Gastrocnemius medialis (tissue), 4 donors: ENCODE measurements at regions of chr2 and their contacts with region 1.

Region 1: GRCh38 chr2:85920810-85921545 is 32.2 kb upstream of the ST3GAL5 start:
- DNase-seq: peak; percentile 31 to 50
- ATAC-seq: peak; percentile 31 to 47
- H3K4me3 ChIP-seq: no peak overlapping the region
- H3K27ac ChIP-seq: peak overlapping the region; percentile 44 to 56 (median 50)
- H3K4me1 ChIP-seq: peaks cover 19 to 23% of the 10 kb centered on the region in 2 donors
- H3K27me3 ChIP-seq: no peaks in the 10 kb centered on the region
- CTCF ChIP-seq: no peak
- POLR2A ChIP-seq: no peak

Region 2: DNA sequence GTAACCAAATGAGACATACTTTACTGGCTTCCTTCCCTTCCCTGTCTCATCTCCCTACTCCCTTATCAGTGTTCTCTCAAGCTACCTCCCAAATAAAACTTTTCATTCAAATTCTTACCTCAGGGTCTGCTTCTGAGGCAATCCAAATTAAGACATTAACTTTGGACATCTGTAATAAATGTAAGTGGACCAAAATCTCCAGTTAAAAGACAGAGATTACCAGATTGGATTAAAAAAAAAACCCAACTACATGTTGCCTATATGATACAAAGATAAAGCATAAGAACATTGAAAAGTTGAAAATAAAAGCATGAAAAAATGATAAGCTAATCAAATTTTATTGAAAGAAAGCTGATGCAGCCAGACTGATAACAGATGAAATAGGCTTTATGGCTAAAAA is 26.6 kb after region 1 on chr2:
- in situ Hi-C with region 1: no loop called
- intact Hi-C with region 1: loop called (anchors 1 kb)
- DNase-seq: no peak
- ATAC-seq: no peak
- H3K4me3 ChIP-seq: no peak overlapping the region
- H3K27ac ChIP-seq: no peak overlapping the region
- H3K4me1 ChIP-seq: no peaks in the 10 kb centered on the region
- H3K27me3 ChIP-seq: no peaks in the 10 kb centered on the region
- CTCF ChIP-seq: no peak
- POLR2A ChIP-seq: no peak